ENCODE measurements at regions of chrX and their contacts with region 1.

Region 1: GRCh38 chrX:132219343-132219768 is at the start of gene RAP2C:
- DNase-seq: peak; percentile 68
- H3K4me3 Mint-ChIP-seq: peak within 1 kb of the TSS; percentile 83
- H3K27ac Mint-ChIP-seq: peak within 1 kb of the TSS; percentile 91
- H3K4me1 Mint-ChIP-seq: peaks cover 21% of the 10 kb centered on the region
- H3K27me3 Mint-ChIP-seq: no peaks in the 10 kb centered on the region
- total RNA-seq, gene RAP2C: 47.1 to 47.8 TPM

Region 2: DNA sequence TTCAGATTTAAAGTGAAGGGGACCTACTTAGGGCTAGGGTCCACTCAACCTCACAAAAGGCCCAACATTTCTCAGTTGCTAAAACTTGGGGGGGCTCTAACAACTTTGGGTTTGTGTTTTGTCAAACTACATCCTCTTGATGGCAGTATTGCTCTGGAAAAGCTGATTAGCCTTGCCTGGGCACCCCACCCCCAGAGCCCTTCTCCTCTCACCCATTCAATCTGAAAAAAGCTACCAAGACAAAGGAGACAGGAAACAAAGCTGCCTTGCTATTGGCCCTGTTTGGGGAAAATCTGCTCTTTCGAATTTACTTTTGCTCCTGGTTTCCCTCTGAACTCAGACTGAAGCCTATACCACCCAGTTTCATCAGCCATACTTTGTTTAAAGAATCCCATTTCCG is 391.4 kb before region 1 on chrX:
- CTCF ChIA-PET with region 1: interaction called, 15 read pairs
- POLR2A ChIA-PET with region 1: interaction called, 8 read pairs
- DNase-seq: peak; percentile 67
- H3K4me3 Mint-ChIP-seq: peak overlapping the region; percentile 79
- H3K27ac Mint-ChIP-seq: peak overlapping the region; percentile 83
- H3K4me1 Mint-ChIP-seq: peaks cover 51% of the 10 kb centered on the region
- H3K27me3 Mint-ChIP-seq: no peaks in the 10 kb centered on the region

Region 3: GRCh38 chrX:131841496-131842410 is 377.6 kb before region 1 on chrX:
- CTCF ChIA-PET with region 1: interaction called, 21 read pairs
- POLR2A ChIA-PET with region 1: no interaction called
- DNase-seq: peak; percentile 24
- H3K4me3 Mint-ChIP-seq: no peak overlapping the region
- H3K27ac Mint-ChIP-seq: no peak overlapping the region
- H3K4me1 Mint-ChIP-seq: peaks cover 2% of the 10 kb centered on the region
- H3K27me3 Mint-ChIP-seq: no peaks in the 10 kb centered on the region

Region 4: GRCh38 chrX:132092439-132093065 is 126.8 kb before region 1 on chrX:
- CTCF ChIA-PET with region 1: interaction called, 25 read pairs
- POLR2A ChIA-PET with region 1: interaction called, 8 read pairs
- DNase-seq: peak; percentile 44
- H3K4me3 Mint-ChIP-seq: no peak overlapping the region
- H3K27ac Mint-ChIP-seq: no peak overlapping the region
- H3K4me1 Mint-ChIP-seq: peaks cover 11% of the 10 kb centered on the region
- H3K27me3 Mint-ChIP-seq: no peaks in the 10 kb centered on the region